CD4-positive, alpha-beta T cell (primary cell): ENCODE measurements at regions of chr10 and their contacts with region 1.

Region 1: GRCh38 chr10:16742165-16742960 is 74.9 kb downstream of the RSU1 start:
- DNase-seq: no peak
- ATAC-seq: no peak
- H3K4me3 ChIP-seq: no peak overlapping the region
- H3K4me3 Mint-ChIP-seq: no peak overlapping the region
- H3K27ac ChIP-seq: no peak overlapping the region
- H3K27ac Mint-ChIP-seq: no peak overlapping the region
- H3K4me1 ChIP-seq: no peaks in the 10 kb centered on the region
- H3K4me1 Mint-ChIP-seq: no peaks in the 10 kb centered on the region
- H3K27me3 ChIP-seq: no peaks in the 10 kb centered on the region
- H3K27me3 Mint-ChIP-seq: no peaks in the 10 kb centered on the region
- CTCF ChIP-seq: no peak

Region 2: DNA sequence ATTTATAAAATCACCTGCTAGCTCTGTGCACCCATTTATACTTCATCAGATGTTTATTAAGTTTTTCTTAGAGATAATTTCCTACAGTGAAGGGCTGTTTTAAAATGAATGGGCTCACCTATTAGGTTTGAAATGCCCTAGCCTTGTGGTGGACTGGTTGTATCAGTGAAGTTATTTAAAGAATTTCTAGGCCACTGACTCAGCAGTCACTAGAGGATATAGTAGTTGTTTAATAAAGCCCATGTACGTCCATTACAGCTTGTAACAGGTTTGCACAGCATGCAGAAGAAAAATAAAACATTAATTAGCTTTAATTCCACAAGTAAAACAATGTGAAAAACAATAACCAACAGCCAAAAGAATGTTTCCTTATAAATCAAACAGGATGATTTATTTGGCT is 53.1 kb before region 1 on chr10:
- CTCF ChIA-PET with region 1: no interaction called
- POLR2A ChIA-PET with region 1: no interaction called
- intact Hi-C with region 1: loop called in 1 of 2 experiments (anchors 10 kb)
- DNase-seq: no peak
- ATAC-seq: no peak
- H3K4me3 ChIP-seq: no peak overlapping the region
- H3K4me3 Mint-ChIP-seq: no peak overlapping the region
- H3K27ac ChIP-seq: no peak overlapping the region
- H3K27ac Mint-ChIP-seq: no peak overlapping the region
- H3K4me1 ChIP-seq: no peaks in the 10 kb centered on the region
- H3K4me1 Mint-ChIP-seq: no peaks in the 10 kb centered on the region
- H3K27me3 ChIP-seq: no peaks in the 10 kb centered on the region
- H3K27me3 Mint-ChIP-seq: no peaks in the 10 kb centered on the region
- CTCF ChIP-seq: no peak

Region 3: DNA sequence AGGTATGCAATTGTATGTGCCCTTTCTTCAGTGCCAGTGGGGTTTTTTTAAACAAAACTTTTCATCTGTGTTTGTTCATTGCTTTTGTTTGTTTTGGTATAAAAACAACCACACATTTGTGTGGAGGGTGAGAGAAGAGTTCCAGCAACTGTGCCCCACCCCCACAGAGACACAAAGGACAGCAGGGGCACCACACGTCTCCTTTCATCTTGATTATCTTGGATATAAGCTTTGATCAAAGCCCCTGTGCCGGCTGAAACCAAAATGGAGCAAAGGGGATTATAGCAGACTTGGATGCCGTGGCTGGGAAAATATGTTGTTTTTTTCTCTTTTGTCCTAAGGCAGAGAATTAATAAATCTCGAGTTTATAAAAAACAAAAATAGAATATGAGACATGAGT is 186.7 kb after region 1 on chr10:
- CTCF ChIA-PET with region 1: no interaction called
- POLR2A ChIA-PET with region 1: no interaction called
- intact Hi-C with region 1: no loop called
- DNase-seq: no peak
- ATAC-seq: no peak
- H3K4me3 ChIP-seq: no peak overlapping the region
- H3K4me3 Mint-ChIP-seq: no peak overlapping the region
- H3K27ac ChIP-seq: no peak overlapping the region
- H3K27ac Mint-ChIP-seq: no peak overlapping the region
- H3K4me1 ChIP-seq: no peaks in the 10 kb centered on the region
- H3K4me1 Mint-ChIP-seq: no peaks in the 10 kb centered on the region
- H3K27me3 ChIP-seq: no peaks in the 10 kb centered on the region
- H3K27me3 Mint-ChIP-seq: no peaks in the 10 kb centered on the region
- CTCF ChIP-seq: no peak